Posterior vena cava (tissue), 2 donors: ENCODE measurements at regions of chr3 and their contacts with region 1.

Region 1: DNA sequence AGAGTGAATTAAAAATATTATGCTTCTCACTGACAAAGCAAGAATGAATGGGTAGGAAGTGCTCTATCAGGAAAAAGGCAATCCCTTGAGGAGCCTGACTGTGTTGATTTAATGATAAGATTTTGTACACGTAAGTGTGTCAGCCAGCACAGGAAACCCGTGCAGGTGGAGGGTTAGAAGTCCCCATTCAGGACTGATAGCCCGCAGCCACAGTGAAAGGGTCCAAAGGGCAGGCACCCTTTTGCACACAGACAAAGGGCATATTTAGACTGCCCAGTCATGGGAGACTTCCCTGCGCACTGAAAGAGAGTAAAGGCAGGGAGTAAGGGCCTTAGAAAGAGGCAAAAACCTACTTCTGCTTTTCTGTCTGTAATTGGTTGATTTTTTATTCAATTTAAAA is 26.4 kb upstream of the SKIL start:
- DNase-seq: no peak

Region 2: DNA sequence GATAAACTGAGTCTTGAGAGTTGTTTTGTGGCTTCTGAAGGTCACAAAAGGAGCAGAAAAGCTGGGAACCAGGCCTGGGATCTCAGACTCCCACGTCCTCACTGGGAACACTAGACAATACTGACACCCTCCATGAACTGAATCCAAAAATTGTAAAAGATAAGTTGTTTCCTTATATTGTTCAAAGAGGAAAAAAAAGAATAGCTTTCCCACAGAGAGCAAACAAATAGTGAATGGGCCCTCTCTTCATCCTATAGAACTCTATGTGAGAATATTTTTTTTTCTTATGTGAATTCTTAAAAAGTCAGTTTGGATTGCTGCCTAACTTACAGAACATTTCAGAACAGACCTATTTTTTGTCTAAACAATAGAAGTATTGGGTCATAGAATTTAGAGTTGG is 871.1 kb before region 1 on chr3:
- intact Hi-C with region 1: no loop called
- DNase-seq: no peak

Region 3: DNA sequence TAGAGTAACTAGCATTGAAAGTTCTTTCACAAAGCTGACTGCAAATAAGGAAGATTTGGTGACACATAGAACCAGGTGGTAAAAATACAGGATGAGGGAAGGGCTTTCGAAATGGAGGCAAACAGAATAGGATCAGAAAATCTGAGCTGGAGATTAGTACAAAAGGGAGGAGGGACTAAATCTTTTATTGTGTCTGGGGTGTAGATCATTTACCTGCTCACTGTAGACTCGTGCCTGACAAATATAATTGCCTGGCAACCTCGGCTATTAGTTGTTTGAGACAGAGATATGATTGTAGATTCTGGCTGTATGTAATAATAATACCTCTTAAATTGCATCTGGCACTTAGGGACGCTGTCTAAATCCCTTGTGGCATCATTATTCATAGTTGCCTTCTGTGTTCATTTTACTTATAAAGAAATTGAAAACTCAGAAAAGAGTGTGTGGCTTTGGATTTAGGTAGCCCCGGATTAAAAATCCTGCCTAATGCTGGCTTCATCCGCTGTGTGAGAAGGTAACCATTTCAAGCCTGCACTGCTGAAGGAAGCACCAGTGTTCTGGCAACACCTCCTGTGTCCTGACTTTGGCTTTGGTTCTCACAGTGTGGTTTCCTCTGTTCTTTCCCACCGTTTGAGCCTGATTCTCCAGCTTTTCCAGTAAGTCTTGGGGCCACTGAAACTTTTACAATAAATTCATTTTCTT is 318.3 kb before region 1 on chr3:
- intact Hi-C with region 1: no loop called
- DNase-seq: no peak

Region 4: DNA sequence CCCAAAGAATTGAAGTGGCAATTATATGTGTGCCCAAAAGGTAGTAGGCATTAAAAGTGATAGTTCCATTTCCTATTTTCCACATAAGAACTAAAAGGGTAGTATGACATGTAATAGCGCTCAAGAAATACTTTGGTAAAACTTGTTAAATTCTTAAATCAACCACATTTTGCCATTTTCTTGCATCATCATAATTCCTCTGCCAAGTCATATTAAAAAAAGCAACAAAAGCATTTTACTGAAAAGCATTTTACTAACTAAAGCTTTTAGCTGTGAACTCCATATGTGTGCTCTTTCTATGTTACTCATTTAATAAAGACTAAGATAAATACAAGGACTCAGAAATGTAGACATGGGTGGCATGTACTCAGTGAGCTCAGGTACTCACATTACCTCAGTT is 223.2 kb before region 1 on chr3:
- intact Hi-C with region 1: no loop called
- DNase-seq: no peak

Region 5: DNA sequence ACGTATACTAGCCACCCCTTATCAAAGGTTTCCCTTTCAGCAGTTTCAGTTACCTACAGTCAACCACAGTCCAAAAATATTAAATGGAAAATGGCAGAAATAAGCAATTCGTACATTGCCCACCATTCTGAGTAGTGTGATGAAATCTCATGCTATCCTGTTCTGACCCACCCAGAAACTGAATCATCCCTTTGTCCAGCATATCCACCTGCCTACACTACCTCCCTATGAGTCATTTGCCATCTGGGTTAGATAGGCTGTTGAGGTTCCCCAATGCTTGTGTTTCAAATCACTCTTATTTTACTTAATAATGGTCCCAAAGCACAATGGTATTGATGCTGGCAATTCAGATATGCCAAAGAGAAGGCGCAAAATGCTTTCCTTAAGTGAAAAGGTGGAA is 134.3 kb before region 1 on chr3:
- intact Hi-C with region 1: no loop called
- DNase-seq: no peak

Region 6: GRCh38 chr3:170346481-170347392 is 15.6 kb after region 1 on chr3:
- intact Hi-C with region 1: loop called in 1 of 2 experiments (anchors 1 kb)
- DNase-seq: no peak